Activated CD4-positive, alpha-beta memory T cell treated with anti-CD3 and anti-CD28 coated beads, Interleukin-2, amount 10 ng/mL, durations not matched to agents 7 days and 5 days (primary cell): ENCODE measurements at regions of chr19 and their contacts with region 1.

Region 1: GRCh38 chr19:29714953-29715700 is at the start of gene C19orf12:
- DNase-seq: peak; percentile 75
- H3K4me3 Mint-ChIP-seq: peak within 1 kb of the TSS; percentile 84
- H3K27ac Mint-ChIP-seq: peak within 1 kb of the TSS; percentile 93
- H3K4me1 Mint-ChIP-seq: peaks cover 50% of the 10 kb centered on the region
- H3K27me3 Mint-ChIP-seq: no peaks in the 10 kb centered on the region
- total RNA-seq, gene C19orf12: 39.2 to 40.7 TPM

Region 2: GRCh38 chr19:29453596-29453995 is 261.5 kb before region 1 on chr19:
- CTCF ChIA-PET with region 1: no interaction called
- POLR2A ChIA-PET with region 1: no interaction called
- DNase-seq: no peak
- H3K4me3 Mint-ChIP-seq: no peak overlapping the region
- H3K27ac Mint-ChIP-seq: no peak overlapping the region
- H3K4me1 Mint-ChIP-seq: no peaks in the 10 kb centered on the region
- H3K27me3 Mint-ChIP-seq: no peaks in the 10 kb centered on the region

Region 3: DNA sequence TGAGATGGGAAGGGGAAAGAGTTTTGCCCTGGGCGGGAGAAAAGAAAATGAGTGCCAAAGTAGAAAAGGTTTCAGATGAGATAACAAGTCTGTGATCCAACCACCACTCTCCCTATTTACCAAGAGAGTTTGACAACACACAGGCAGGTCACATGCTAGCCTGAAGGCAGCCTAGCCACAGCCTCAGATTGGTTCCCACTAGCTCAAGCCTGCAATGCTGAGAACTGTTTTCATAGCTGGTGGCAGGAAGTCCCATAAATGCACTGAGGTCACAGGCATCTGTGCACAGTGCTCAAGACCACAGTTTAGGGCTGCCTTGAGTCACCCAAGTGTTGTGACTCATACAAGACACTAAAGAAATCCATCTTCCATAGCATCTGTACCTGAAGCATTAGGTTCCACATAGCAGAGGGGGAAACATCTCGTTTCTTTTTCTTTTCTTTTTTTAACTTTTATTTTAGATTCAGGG is 127.6 kb before region 1 on chr19:
- CTCF ChIA-PET with region 1: interaction called, 10 read pairs
- POLR2A ChIA-PET with region 1: no interaction called
- DNase-seq: peak; percentile 86
- H3K4me3 Mint-ChIP-seq: no peak overlapping the region
- H3K27ac Mint-ChIP-seq: peak overlapping the region; percentile 75
- H3K4me1 Mint-ChIP-seq: peaks cover 29% of the 10 kb centered on the region
- H3K27me3 Mint-ChIP-seq: peaks cover 25% of the 10 kb centered on the region

Region 4: DNA sequence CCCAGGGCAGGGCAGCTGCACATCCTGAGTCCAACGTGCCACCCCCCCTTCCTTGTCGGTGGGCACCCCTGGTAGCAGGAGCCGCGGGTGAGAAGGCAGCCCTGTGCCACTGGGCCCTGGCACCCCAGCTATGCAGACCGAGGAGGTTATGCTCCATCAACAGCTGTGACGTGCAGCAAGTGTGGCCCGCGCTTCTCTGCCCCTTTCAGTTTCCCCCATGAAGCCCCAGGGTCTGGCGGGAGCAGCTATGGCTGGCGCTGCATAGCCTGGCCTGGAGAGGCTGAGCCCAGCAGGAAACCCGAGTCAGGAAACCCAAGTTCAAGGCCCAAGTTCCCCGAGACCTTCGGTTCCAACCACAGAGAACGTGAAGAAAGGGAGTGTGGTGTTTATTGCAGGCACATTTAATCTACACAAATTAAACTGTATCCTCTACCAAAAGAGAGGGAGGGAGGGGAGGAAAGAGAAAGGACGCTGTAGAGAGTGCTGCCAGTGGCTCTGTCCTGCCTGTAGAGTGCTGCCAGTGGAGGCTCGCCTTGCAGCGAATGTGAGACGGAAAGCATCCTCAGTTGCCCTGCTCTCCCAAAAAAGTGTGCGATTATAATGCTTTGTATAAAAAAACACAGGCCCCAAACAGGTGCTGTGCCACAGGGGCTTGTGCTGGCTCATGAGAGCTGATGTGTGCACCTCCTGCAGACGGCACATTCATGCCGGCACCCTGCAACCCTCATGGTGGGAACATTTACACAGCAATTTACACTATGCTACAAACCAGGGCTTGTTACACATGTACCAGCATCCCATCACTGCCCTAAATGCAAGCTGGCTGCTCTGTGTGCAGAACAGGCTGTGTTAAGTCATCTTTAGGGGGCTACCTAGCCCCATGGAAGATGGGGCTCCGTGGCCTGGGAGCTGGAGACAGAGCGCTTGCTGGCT is 92.7 kb before region 1 on chr19:
- CTCF ChIA-PET with region 1: interaction called, 43 read pairs
- POLR2A ChIA-PET with region 1: interaction called, 68 read pairs
- DNase-seq: peak; percentile 44
- H3K4me3 Mint-ChIP-seq: peak overlapping the region; percentile 86
- H3K27ac Mint-ChIP-seq: peak overlapping the region; percentile 97
- H3K4me1 Mint-ChIP-seq: peaks cover 65% of the 10 kb centered on the region
- H3K27me3 Mint-ChIP-seq: no peaks in the 10 kb centered on the region

Region 5: DNA sequence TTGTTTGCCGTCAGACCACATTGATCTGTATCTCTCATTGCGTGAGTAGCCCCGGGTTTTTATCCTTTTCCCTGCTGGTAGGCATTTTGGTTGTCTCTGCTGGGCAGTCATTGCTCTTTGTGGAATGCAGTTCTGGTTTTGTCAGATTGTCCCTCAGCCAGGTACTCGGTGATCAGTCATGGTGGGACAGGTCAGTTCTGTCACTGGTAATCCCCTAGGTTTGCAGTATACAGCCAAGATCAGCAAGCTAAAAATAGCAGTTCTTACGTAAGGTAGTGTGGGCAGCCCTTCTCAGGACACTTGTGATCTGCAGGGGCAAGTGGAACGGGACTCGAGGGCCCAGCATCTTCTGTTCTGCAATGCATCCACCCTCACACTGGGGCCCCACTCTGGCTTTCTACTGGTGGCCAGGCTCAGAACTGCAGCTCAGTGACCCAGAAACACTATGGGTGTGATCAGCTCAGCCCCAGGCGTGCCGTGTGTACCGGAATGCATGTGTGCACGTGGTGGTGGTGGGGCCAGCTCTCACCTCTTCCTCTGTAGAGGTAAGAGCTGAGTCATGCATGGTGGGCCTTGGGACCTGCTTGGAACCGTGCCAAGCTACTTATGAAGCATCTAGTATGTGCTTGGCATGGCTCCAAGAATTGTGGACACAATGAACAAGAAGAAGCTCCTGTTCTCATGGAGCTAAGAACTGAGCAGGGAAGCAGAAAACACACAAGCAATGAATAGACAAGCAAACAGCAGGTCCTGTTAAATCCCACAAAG is 43.5 kb before region 1 on chr19:
- CTCF ChIA-PET with region 1: interaction called, 97 read pairs
- POLR2A ChIA-PET with region 1: interaction called, 111 read pairs
- DNase-seq: peak; percentile 94
- H3K4me3 Mint-ChIP-seq: peak overlapping the region; percentile 65
- H3K27ac Mint-ChIP-seq: peak overlapping the region; percentile 97
- H3K4me1 Mint-ChIP-seq: peaks cover 93% of the 10 kb centered on the region
- H3K27me3 Mint-ChIP-seq: no peaks in the 10 kb centered on the region

Region 6: GRCh38 chr19:29694669-29695627 is 20.2 kb before region 1 on chr19:
- CTCF ChIA-PET with region 1: interaction called, 147 read pairs
- POLR2A ChIA-PET with region 1: interaction called, 44 read pairs
- DNase-seq: peak; percentile 85
- H3K4me3 Mint-ChIP-seq: no peak overlapping the region
- H3K27ac Mint-ChIP-seq: peak overlapping the region; percentile 49
- H3K4me1 Mint-ChIP-seq: peaks cover 19% of the 10 kb centered on the region
- H3K27me3 Mint-ChIP-seq: no peaks in the 10 kb centered on the region

Region 7: DNA sequence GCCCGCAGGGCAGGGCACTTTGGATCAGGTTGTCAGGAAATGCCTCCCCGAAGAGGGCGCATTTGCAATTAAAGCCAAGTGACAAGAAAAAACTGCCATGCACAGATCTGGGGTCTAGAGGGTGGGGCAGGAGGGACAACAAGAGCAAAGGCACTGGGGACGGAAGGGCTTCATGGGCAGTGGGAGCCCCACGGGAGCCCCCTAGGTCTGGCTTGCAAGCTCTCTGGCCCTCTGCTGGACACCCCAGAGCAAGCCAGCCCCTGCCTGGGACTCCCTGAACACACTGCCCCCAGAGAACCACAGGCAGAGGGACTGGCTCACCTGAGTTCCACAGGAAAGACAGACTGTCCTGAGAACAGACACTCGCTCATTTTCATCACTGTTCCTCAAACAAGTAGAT is 30.1 kb after region 1 on chr19:
- CTCF ChIA-PET with region 1: no interaction called
- POLR2A ChIA-PET with region 1: no interaction called
- DNase-seq: no peak
- H3K4me3 Mint-ChIP-seq: no peak overlapping the region
- H3K27ac Mint-ChIP-seq: no peak overlapping the region
- H3K4me1 Mint-ChIP-seq: no peaks in the 10 kb centered on the region
- H3K27me3 Mint-ChIP-seq: no peaks in the 10 kb centered on the region

Region 8: DNA sequence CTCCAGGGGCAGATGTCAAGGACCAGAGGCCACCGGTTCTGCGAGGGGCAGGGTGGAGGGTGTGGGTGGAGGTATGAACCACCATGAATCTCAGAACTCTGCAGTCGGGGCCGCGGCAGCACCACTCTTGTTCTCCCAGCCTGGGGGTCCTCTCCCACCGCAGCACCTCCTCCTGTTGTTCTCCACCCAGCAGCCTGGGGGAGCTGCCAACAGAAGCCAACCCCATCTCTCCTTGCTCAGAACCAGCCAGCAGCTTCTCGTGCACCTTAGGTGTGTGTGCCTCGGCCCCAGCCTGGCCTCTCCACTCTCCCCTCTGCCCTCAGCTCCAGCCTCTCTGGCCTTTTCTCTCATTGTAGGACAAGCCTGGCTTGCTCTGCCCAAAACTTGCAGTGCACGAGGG is 64.8 kb after region 1 on chr19:
- CTCF ChIA-PET with region 1: no interaction called
- POLR2A ChIA-PET with region 1: no interaction called
- DNase-seq: no peak
- H3K4me3 Mint-ChIP-seq: no peak overlapping the region
- H3K27ac Mint-ChIP-seq: no peak overlapping the region
- H3K4me1 Mint-ChIP-seq: no peaks in the 10 kb centered on the region
- H3K27me3 Mint-ChIP-seq: peaks cover 3% of the 10 kb centered on the region

Region 9: DNA sequence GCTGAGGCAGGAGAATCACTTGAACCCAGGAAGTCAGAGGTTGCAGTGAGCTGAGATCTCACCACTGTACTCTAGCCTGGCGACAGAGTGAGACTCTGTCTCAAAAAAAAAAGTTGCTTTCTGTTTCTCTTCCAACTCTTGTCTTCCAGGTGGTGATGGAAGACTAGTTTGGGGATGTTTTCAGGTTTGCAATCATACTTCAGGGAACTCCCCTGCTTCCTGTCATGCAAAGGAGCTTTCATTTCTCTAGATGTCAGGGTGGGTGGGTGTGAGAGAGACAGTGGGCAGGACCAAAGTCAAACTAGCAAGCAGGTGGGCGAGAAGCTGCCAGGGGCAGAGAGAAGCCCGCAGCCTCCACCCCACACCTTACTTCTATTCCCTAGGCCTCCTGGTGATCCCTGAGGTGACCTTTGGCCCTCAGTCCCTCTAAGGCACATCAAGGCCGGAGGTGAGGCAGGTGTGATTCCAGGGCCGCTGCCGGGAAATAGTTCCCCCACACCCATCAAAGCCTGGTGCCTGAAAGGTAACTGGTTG is 122.4 kb after region 1 on chr19:
- CTCF ChIA-PET with region 1: interaction called, 3 read pairs
- POLR2A ChIA-PET with region 1: interaction called, 13 read pairs
- DNase-seq: peak; percentile 34
- H3K4me3 Mint-ChIP-seq: peak overlapping the region; percentile 56
- H3K27ac Mint-ChIP-seq: peak overlapping the region; percentile 91
- H3K4me1 Mint-ChIP-seq: peaks cover 49% of the 10 kb centered on the region
- H3K27me3 Mint-ChIP-seq: peaks cover 6% of the 10 kb centered on the region

Region 10: GRCh38 chr19:29873024-29873800 is 158.1 kb after region 1 on chr19:
- CTCF ChIA-PET with region 1: interaction called, 10 read pairs
- POLR2A ChIA-PET with region 1: no interaction called
- DNase-seq: peak; percentile 67
- H3K4me3 Mint-ChIP-seq: peak overlapping the region; percentile 60
- H3K27ac Mint-ChIP-seq: no peak overlapping the region
- H3K4me1 Mint-ChIP-seq: peaks cover 18% of the 10 kb centered on the region
- H3K27me3 Mint-ChIP-seq: peaks cover 24% of the 10 kb centered on the region